Activated B cell treated with CpG ODN at 0.5 μM for 24 hours (primary cell): ENCODE measurements at regions of chr7 and their contacts with region 1.

Region 1: DNA sequence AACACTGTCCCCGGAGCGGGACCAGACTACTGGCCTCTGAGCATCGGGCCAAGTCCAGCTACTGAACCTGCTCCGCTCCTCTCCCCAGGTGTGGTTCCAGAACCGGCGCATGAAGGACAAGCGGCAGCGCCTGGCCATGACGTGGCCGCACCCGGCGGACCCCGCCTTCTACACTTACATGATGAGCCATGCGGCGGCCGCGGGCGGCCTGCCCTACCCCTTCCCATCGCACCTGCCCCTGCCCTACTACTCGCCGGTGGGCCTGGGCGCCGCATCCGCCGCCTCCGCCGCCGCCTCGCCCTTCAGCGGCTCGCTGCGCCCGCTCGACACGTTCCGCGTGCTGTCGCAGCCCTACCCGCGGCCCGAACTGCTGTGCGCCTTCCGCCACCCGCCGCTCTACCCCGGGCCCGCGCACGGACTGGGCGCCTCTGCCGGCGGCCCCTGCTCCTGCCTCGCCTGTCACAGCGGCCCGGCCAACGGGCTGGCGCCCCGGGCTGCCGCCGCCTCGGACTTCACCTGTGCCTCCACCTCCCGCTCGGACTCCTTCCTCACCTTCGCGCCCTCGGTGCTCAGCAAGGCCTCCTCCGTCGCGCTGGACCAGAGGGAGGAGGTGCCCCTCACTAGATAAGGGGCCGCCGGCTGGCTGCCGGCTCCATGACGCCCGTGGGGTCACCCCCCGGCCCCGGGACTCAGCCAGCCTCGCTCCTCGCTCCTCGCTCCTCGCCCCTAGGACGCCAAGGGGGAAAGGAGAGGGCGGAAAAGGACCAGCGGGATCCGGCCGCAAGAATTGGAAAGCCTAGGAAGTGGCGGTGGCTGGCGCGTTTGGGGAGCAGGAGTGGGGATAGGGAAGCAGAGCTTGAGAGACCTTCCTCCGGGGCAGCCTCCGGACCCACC is 3.4 kb downstream of the EVX1 start:
- DNase-seq: no peak
- ATAC-seq: no peak
- H3K4me3 Mint-ChIP-seq: no peak overlapping the region
- H3K27ac Mint-ChIP-seq: no peak overlapping the region
- H3K4me1 Mint-ChIP-seq: peaks cover 36% of the 10 kb centered on the region
- H3K27me3 Mint-ChIP-seq: peaks cover 76% of the 10 kb centered on the region
- CTCF ChIP-seq: no peak

Region 2: DNA sequence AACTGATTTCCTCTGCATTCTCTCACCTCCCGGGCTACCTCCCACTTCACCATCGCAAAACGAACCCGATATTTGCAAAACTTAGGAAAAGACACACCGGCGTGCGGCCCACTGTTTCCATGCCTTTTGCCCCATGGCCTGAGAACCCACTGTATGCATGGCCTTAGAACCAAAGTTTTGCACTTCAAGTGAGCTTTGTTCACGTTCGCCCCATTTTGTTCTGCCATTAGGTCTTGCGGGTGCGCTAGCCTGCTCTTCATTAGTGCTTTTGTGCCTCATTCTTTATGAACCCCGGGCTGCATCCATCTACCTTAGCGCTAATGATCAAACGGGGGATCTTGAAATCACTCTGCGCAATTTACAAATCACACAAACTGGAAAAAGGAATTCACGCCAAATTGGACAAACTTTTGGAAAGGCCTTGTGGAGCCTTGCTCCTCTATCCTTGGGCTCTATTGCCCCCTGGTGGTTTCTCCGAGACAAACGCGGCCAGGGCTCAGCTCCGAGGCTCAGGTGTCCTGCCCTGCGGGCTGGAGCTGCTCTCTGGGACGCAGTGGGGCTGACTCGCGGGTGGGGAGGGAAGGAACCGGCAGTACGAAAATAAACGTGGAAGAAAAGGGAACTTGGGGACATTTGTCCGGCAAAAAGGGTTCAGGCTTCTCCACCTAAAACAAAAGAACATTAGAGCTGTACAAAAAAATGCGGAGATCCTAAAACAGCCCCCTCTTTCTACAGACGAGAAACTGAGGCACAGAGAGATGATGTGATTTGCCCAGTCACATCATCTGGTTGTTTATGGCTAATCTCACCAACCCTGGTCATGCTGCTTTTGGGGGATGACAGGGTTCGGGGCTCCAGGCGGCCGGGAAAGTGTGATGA is 1394.5 kb before region 1 on chr7:
- CTCF ChIA-PET with region 1: no interaction called
- POLR2A ChIA-PET with region 1: no interaction called
- intact Hi-C with region 1: loop called (anchors 5 kb)
- DNase-seq: no peak
- ATAC-seq: peak; percentile 64
- H3K4me3 Mint-ChIP-seq: peak overlapping the region; percentile 70
- H3K27ac Mint-ChIP-seq: peak overlapping the region; percentile 76
- H3K4me1 Mint-ChIP-seq: peaks cover 12% of the 10 kb centered on the region
- H3K27me3 Mint-ChIP-seq: peaks cover 50% of the 10 kb centered on the region
- CTCF ChIP-seq: no peak

Region 3: DNA sequence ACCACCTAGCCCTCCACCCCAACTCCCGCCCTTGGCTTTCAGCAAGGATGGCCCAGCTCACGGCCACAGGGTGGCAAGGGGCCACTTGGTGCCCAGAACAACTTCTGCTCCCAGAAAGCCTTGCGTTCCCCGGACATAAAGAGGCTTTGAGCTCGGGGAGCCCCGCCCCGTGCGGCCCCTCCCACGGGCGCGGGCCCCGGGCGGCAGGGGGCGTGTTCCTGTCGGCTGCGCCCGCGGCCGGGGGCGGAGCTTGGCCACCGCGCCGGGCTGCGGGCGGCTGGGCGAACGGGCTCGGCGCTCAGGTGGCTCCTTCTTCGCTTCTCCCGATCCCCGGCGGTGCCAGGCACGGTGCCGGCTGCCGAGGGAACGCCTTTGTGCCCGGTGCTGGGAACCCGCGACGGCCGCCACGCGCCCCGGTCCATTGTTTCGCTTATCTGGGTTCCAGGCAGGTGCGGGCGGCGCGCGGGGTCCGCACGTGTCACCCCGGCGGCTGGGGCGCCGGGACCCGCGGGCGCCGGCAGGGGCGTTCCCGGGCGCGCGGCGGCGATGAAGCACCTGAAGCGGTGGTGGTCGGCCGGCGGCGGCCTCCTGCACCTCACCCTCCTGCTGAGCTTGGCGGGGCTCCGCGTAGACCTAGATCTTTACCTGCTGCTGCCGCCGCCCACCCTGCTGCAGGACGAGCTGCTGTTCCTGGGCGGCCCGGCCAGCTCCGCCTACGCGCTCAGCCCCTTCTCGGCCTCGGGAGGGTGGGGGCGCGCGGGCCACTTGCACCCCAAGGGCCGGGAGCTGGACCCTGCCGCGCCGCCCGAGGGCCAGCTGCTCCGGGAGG is 1093.9 kb before region 1 on chr7 and contains the start of gene NFE2L3:
- CTCF ChIA-PET with region 1: no interaction called
- POLR2A ChIA-PET with region 1: no interaction called
- intact Hi-C with region 1: no loop called
- DNase-seq: peak; percentile 82
- ATAC-seq: peak; percentile 90
- H3K4me3 Mint-ChIP-seq: peak within 1 kb of the TSS; percentile 94
- H3K27ac Mint-ChIP-seq: peak within 1 kb of the TSS; percentile 86
- H3K4me1 Mint-ChIP-seq: peaks cover 48% of the 10 kb centered on the region
- H3K27me3 Mint-ChIP-seq: no peaks in the 10 kb centered on the region
- CTCF ChIP-seq: no peak
- total RNA-seq, gene NFE2L3: 2.7 and 3.0 TPM in 2 replicates

Region 4: GRCh38 chr7:27224983-27225934 is 20.8 kb before region 1 on chr7:
- CTCF ChIA-PET with region 1: no interaction called
- POLR2A ChIA-PET with region 1: no interaction called
- intact Hi-C with region 1: loop called (anchors 1 kb)
- DNase-seq: no peak
- ATAC-seq: no peak
- H3K4me3 Mint-ChIP-seq: no peak overlapping the region
- H3K27ac Mint-ChIP-seq: no peak overlapping the region
- H3K4me1 Mint-ChIP-seq: peaks cover 10% of the 10 kb centered on the region
- H3K27me3 Mint-ChIP-seq: peaks cover 57% of the 10 kb centered on the region
- CTCF ChIP-seq: no peak